ENCODE measurements at regions of chr9 and their contacts with region 1.

Region 1: GRCh38 chr9:6353851-6354686 is 25.9 kb downstream of the TPD52L3 start:
- DNase-seq: peak in 3 of 5 donors; percentile 50 to 61 (median 55)
- H3K4me3 ChIP-seq: no peak overlapping the region
- H3K4me3 Mint-ChIP-seq: no peak overlapping the region
- H3K27ac ChIP-seq: no peak overlapping the region
- H3K27ac Mint-ChIP-seq: peak overlapping the region in 1 of 8 donors; percentile 8
- H3K4me1 ChIP-seq: no peaks in the 10 kb centered on the region
- H3K4me1 Mint-ChIP-seq: no peaks in the 10 kb centered on the region
- H3K27me3 ChIP-seq: no peaks in the 10 kb centered on the region
- H3K27me3 Mint-ChIP-seq: peaks cover 4 to 9% of the 10 kb centered on the region in 2 donors

Region 2: GRCh38 chr9:6566409-6567139 is 212.5 kb after region 1 on chr9:
- CTCF ChIA-PET with region 1: interaction called, 64 read pairs
- POLR2A ChIA-PET with region 1: no interaction called
- DNase-seq: no peak
- H3K4me3 ChIP-seq: no peak overlapping the region
- H3K4me3 Mint-ChIP-seq: no peak overlapping the region
- H3K27ac ChIP-seq: no peak overlapping the region
- H3K27ac Mint-ChIP-seq: no peak overlapping the region
- H3K4me1 ChIP-seq: no peaks in the 10 kb centered on the region
- H3K4me1 Mint-ChIP-seq: no peaks in the 10 kb centered on the region
- H3K27me3 ChIP-seq: no peaks in the 10 kb centered on the region
- H3K27me3 Mint-ChIP-seq: peaks cover 0 to 4% of the 10 kb centered on the region in 2 donors

Measured in CD8-positive, alpha-beta memory T cell (primary cell).